ENCODE measurements at regions of chr7 and their contacts with region 1.

Region 1: DNA sequence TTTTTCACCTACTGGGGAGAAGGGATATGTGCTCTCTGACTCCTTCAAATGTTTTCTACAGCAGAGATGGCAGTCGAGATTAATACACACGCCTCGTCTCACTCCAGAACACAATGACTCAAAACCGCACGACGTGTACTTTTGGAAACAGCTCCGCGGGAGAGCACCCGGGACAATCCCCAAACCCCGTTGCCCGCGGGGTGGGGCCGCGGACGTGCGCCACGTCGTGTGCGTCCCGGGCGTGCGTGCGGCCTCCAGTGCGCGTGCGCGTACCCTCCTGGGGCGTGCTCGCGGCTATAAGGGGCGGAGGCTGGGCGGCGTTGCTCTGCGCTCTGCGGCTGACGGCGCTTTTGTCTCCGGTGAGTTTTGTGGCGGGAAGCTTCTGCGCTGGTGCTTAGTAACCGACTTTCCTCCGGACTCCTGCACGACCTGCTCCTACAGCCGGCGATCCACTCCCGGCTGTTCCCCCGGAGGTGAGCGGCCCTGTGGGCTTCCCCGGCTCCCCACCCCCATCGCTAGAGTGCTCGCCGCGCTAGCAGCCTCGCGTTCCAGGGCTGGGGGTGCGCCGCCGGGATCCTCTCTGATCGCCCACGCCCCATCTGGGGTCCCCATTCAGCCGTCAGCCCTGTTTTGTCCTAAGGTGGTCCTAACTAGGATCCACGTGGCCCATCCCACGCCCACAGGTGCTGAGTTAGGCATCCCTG is at the start of gene HILPDA:
- DNase-seq: peak; percentile 83 to 92
- ATAC-seq: peak; percentile 84 to 92
- H3K4me3 ChIP-seq: peak within 1 kb of the TSS; percentile 71 to 89 (median 84)
- H3K27ac ChIP-seq: peak within 1 kb of the TSS; percentile 83 to 92 (median 88)
- H3K4me1 ChIP-seq: peaks cover 20 to 22% of the 10 kb centered on the region in 2 donors
- H3K27me3 ChIP-seq: no peaks in the 10 kb centered on the region
- CTCF ChIP-seq: no peak
- POLR2A ChIP-seq: peak; percentile 66 to 80
- total RNA-seq, gene HILPDA: 1.1 to 4.3 (median 3.2) TPM

Region 2: DNA sequence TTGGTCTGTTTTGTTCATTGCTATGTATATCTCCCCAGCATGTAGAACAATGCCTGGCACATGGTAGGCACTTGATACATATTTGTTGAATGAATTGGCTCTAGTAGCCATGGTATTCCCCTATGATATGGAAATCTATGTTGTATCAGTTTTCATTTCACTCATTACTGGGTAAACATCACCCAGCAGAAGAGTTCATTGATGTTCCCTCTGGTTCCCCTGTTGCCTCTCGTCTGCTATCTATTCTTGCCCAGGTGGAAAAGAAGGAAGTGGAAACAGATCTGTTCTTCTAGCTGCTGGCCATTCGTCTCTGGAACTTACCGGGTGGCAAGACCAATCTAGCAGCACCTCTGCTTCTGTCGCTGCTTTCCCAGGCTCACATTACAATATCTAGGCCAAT is 495.9 kb before region 1 on chr7:
- in situ Hi-C with region 1: no loop called
- intact Hi-C with region 1: no loop called
- DNase-seq: no peak
- ATAC-seq: no peak
- H3K4me3 ChIP-seq: no peak overlapping the region
- H3K27ac ChIP-seq: no peak overlapping the region
- H3K4me1 ChIP-seq: no peaks in the 10 kb centered on the region
- H3K27me3 ChIP-seq: no peaks in the 10 kb centered on the region
- CTCF ChIP-seq: no peak
- POLR2A ChIP-seq: no peak

Region 3: DNA sequence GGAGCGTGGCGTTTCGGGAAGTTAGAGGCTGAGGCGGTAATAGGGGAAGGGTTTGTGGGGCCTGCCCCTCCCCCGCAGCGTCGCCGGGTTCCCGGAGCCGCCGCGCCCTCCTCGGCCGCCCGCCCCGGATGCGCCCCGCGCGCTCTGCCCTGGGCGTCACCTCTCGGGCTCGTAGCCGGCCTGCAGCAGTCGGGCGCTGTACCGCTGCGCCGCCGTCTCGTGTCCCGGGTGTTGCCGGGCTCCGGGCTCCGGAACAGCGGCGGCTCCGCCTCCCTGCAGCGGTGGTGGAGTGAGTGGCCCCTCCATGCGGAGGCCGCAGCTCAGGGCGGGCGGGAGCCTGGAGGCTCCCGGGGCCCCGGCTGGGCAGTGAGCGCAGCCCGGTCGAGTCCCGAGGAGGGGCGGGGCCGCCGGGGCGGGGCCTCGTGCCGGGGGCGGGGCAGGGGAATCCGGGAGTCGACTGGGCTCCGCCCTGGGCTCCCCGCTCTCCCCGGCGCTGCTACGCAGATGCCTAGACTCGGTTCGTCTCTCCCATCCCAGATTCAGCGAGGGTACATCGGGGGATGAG is 46.0 kb before region 1 on chr7 and contains the start of gene IMPDH1:
- in situ Hi-C with region 1: no loop called
- intact Hi-C with region 1: loop called (anchors 2 kb)
- DNase-seq: peak; percentile 64 to 72
- ATAC-seq: peak; percentile 85 to 86
- H3K4me3 ChIP-seq: peak within 1 kb of the TSS; percentile 59 to 83 (median 70)
- H3K27ac ChIP-seq: peak within 1 kb of the TSS; percentile 76 to 83 (median 76)
- H3K4me1 ChIP-seq: peaks cover 11 to 27% of the 10 kb centered on the region in 2 donors
- H3K27me3 ChIP-seq: peaks cover 0 to 7% (median 6%) of the 10 kb centered on the region in 3 donors
- CTCF ChIP-seq: no peak
- POLR2A ChIP-seq: peak; percentile 52 to 63
- total RNA-seq, gene IMPDH1: 4.0 to 7.1 (median 4.9) TPM

Measured in gastrocnemius medialis (tissue), 4 donors.